ENCODE measurements at regions of chr14 and their contacts with region 1.

Region 1: DNA sequence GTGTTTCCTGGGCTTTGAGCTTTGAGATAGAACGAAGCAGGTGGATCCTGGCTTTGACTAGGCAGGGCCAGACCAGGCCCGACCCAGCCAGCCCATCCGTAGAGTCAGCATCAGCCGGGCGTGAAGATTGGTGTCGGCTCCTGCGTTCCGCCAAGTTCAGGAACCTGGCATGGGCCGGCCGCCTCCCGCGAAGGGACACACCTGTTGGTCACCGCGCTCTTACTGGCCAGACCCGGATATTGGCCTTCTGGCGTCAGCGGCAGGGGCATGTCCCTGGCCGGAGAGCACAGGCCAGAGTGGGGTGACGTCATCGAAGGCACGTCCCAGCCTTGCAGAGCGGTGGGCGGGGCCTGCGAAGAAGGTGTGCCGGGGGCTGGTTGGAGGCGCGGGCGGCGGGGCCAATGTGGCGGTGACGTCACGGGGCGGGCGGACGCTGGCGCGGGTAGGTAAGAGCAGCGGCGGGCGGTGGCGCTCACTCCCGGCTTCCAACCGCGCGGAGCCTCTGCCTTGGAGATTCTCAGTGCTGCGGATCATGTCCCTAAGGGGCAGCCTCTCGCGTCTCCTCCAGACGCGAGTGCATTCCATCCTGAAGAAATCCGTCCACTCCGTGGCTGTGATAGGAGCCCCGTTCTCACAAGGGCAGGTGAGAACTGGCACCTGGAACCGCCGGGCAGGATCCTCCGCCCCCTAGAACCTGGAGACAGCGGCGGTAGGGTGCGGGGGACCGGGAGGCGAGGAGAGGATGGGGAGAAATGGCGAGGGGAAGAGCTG is at the start of gene ARG2:
- DNase-seq: peak; percentile 97
- CTCF ChIP-seq: peak; percentile 7

Region 2: DNA sequence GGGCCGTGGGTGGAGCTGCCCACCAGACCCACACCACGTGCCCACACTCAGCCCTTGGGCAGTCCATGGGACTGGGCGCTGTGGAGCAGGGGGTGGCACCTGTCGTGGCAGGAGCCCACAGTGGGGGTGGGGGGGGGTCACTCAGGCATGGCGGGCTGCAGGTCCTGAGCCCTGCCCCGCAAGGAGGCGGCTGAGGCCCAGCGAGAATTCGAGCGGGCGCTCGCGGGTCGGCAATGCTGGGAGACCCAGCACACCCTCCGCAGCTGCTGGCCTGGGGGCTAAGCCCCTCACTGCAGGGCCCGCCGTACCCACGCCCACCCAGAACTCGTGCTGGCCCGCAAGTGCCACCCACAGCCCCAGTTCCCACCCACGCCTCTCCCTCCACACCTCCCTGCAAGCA is 562.9 kb before region 1 on chr14:
- CTCF ChIA-PET with region 1: no interaction called
- POLR2A ChIA-PET with region 1: no interaction called
- DNase-seq: no peak
- CTCF ChIP-seq: no peak

Region 3: DNA sequence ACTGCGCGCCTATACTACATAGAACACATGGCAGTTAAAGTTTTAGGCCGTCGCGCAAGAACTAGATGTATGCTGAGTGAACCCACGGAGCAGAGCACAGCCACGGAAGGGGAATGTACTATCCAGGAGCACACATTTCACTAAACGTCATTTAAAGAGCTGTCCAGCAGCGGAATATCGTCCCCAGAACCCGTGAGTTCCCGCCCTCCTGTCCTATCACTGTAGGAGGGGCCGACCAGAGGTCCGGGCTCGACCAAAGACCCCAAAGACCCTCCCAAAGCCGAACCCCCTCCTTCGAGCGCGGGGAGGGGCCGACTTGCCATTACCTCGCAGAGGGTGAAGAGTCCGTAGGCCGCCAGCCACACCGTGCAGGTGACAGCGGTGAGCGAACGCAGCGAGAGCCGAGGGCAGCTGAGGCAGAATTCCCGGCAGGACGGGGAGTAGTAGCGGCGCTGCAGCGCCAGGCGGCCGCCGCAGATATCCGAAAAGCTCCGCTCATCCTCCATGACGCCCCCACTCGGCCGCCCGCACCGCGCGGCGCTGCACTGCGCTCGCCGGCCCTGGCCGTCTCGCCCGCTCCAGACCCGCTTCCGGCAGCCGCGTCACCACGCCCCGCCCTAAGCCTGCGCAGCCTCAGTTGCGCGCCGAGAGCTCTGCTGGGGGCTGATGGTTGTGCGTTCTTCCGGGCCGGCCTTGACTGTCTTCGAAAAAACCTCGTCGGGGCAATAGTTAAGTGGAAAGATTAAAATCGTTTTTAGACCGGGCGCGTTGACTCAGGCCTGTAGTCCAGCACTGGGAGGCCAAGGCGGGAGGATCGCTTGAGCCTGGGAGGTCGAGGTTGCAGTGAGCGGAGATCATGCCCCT is 19.7 kb before region 1 on chr14 and contains the start of gene PIGH:
- CTCF ChIA-PET with region 1: interaction called, 59 read pairs
- POLR2A ChIA-PET with region 1: interaction called, 4 read pairs
- DNase-seq: peak; percentile 95
- CTCF ChIP-seq: peak; percentile 54

Region 4: DNA sequence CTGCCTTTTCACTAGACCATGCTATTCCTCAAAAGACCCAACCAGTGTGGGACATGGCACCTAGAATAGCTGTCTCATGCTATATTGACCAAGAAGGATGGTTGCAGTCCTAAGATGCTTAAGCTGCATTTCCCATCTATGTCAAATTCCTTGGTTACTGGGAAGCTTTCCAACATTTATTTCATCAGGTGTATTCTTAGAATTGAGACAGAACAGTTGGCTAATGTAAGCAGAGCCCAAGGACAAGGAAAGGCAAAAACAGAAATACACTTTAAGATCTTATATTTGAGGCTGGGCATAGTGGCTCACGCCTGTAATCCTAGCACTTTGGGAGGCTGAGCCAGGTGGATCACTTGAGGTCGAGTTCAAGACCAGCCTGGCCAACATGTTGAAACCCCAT is 24.8 kb after region 1 on chr14:
- CTCF ChIA-PET with region 1: interaction called, 16 read pairs
- POLR2A ChIA-PET with region 1: no interaction called
- DNase-seq: no peak
- CTCF ChIP-seq: no peak

Region 5: GRCh38 chr14:67680121-67680602 is 60.5 kb after region 1 on chr14:
- CTCF ChIA-PET with region 1: interaction called, 10 read pairs
- POLR2A ChIA-PET with region 1: no interaction called
- DNase-seq: peak; percentile 82
- CTCF ChIP-seq: no peak

Region 6: DNA sequence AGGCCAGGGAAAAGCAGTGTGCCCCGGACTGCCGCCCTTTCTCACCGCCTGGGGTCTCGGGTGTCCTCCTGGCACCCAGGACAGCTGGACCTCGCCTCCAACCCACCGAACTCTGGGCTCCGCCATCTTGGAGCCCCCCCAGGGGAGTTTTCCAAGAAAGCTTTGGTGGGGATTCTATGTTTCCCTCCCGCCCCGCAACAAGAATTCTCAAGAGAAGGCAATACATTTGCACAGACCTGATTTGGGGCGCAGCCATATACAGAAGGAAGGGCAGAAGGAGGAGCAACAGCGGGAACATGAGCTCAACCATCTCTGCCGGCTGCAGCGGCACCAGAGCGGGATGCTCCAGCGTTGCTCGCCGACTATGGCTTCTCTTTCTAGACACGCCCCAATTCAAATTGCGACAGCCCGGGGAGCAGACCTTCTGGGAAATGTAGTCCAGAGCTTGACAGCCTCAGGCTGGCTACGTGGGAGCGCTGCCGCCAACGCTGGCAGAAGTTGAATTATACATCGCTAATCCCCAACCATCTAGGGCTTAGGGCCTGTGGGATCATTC is 75.8 kb after region 1 on chr14 and contains the start of gene RDH11:
- CTCF ChIA-PET with region 1: interaction called, 12 read pairs
- POLR2A ChIA-PET with region 1: no interaction called
- DNase-seq: peak; percentile 88
- CTCF ChIP-seq: no peak

Measured in GM10248 (cell line).